Gastrocnemius medialis (tissue), 4 donors: ENCODE measurements at regions of chr18 and their contacts with region 1.

Region 1: GRCh38 chr18:63963615-63964256 is 6.1 kb upstream of the SERPINB8 start:
- DNase-seq: no peak
- ATAC-seq: peak; percentile 30 to 33
- H3K4me3 ChIP-seq: no peak overlapping the region
- H3K27ac ChIP-seq: no peak overlapping the region
- H3K4me1 ChIP-seq: no peaks in the 10 kb centered on the region
- H3K27me3 ChIP-seq: no peaks in the 10 kb centered on the region
- CTCF ChIP-seq: peak; percentile 28 to 74 (median 44)
- POLR2A ChIP-seq: no peak

Region 2: DNA sequence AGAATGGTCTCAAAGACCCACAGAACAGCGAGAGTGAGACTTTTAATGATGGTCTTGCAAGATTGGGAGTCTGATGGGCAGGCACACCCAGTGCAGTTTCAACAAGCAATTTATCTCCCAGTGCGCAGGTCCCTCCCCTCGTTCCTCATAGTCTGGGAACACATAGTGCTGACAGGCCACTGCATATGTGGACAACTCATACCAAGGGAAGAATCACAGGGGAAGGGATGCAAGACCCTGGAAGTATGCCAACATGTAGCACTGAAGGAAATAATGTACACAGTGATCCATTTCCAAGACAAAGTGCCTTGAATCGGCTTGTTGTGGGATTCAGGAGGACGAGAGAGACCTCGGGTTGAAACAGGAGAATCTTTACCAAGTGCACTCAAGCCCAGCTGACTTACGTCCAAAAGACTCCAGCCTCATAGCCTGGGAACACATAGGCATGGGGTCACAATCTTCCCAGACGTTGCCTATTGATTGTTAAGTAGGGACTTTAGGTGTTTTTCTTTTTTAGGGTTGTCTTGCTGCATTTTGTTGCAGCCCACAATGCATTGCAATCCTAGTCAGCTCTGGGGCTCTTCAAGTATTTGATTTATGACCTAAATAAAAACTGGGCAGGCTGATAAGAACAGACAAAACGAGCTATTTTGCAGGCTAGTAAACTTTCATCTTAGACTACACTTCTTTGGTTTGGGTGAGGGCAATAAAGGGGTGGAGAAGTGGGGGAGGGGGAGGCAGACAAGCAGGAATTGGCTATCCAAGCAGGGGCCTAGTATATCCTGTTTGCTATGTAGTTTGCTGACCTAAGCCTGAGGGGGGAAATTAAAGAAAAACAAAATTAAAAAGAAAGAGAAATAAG is 511.7 kb before region 1 on chr18:
- in situ Hi-C with region 1: no loop called
- intact Hi-C with region 1: no loop called
- DNase-seq: no peak
- ATAC-seq: no peak
- H3K4me3 ChIP-seq: no peak overlapping the region
- H3K27ac ChIP-seq: no peak overlapping the region
- H3K4me1 ChIP-seq: no peaks in the 10 kb centered on the region
- H3K27me3 ChIP-seq: no peaks in the 10 kb centered on the region
- CTCF ChIP-seq: no peak
- POLR2A ChIP-seq: no peak

Region 3: DNA sequence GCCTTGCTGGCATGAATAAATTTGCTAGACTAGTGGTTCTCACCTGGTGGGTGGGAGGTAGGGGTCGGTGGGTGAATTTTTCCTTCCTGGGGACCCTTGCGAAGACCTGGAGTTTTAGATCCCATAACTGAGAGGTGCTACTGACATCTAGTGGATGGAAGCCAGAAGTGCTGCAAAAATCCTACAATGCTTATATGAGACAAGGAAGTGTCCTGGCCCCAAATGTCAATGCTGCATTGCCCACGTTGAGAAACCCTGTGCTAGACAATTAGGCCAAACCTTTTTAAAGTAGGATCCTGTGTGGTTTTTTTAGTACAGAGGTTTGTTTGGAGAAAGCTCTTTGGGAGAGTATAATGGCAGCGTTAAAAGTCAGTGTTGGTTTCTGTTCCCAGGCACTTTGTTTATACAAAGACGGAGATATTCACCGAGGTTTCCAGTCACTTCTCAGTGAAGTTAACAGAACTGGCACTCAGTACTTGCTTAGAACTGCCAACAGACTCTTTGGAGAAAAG is 15.7 kb after region 1 on chr18:
- in situ Hi-C with region 1: no loop called
- intact Hi-C with region 1: loop called (anchors 1 kb)
- DNase-seq: peak; percentile 9 to 23
- ATAC-seq: peak; percentile 50 to 78
- H3K4me3 ChIP-seq: peak overlapping the region in 3 of 4 donors; percentile 8 to 39 (median 10)
- H3K27ac ChIP-seq: no peak overlapping the region
- H3K4me1 ChIP-seq: peaks cover 0 to 7% of the 10 kb centered on the region in 2 donors
- H3K27me3 ChIP-seq: no peaks in the 10 kb centered on the region
- CTCF ChIP-seq: peak; percentile 43 to 75 (median 55)
- POLR2A ChIP-seq: no peak

Region 4: DNA sequence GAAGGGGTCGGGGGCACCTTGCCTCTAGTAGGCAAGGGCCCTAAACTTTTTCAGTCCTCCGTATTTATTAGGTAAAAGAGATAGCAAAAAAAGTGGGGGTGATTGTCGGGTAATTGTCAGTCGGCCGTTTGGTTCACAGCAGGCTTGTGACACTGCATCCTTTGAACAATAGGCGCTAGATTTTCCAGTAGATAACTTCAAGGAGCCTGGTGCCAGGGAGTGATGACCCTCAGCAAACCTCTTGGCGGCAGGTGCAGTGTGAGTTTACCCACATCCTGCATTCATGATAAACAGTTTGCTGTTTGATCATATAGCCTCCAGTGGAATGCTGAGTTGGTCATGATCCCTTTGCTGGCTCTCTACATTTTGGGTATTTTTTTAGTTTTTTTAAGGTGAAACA is 29.0 kb after region 1 on chr18:
- in situ Hi-C with region 1: no loop called
- intact Hi-C with region 1: loop called (anchors 1 kb)
- DNase-seq: no peak
- ATAC-seq: no peak
- H3K4me3 ChIP-seq: no peak overlapping the region
- H3K27ac ChIP-seq: no peak overlapping the region
- H3K4me1 ChIP-seq: no peaks in the 10 kb centered on the region
- H3K27me3 ChIP-seq: no peaks in the 10 kb centered on the region
- CTCF ChIP-seq: no peak
- POLR2A ChIP-seq: no peak

Region 5: DNA sequence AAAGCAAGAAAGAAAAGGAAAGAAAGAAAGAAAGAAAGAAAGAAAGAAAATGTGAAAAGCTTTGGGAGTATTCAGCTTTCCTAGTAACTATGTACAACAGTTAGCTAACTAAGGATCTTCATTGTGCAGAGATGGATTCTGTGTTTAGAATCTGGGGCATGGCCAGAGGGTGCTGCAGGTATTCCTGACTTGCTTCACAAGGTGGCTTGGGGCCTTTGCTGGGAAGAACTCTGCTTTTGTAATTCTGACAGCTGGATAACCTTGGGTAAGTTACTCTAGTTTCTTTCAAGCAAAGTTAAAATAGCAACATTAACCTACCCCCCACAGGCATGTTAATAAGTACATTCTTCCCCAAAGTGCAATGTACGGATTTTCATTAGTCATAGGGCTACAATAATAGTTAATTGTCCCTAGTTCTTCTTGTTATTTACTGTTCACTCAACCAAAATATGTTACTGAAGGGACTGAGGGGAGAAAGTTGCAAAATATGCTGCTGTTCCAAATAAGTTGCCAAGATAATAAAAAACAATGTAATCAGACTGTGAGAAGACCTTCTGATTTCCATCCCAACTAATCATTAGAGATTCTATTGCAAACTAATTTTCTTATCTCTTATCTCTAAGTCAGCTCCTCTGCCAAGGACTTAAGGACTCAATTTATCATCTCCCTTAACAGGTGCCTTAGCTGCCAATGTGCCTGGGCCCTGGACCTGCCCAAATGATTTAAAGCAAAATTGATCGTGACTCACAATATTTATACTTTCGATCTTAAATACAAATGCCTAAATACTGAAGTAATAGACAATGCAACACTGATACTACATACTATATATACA is 56.4 kb after region 1 on chr18:
- in situ Hi-C with region 1: no loop called
- intact Hi-C with region 1: no loop called
- DNase-seq: no peak
- ATAC-seq: no peak
- H3K4me3 ChIP-seq: no peak overlapping the region
- H3K27ac ChIP-seq: no peak overlapping the region
- H3K4me1 ChIP-seq: no peaks in the 10 kb centered on the region
- H3K27me3 ChIP-seq: no peaks in the 10 kb centered on the region
- CTCF ChIP-seq: no peak
- POLR2A ChIP-seq: no peak

Region 6: DNA sequence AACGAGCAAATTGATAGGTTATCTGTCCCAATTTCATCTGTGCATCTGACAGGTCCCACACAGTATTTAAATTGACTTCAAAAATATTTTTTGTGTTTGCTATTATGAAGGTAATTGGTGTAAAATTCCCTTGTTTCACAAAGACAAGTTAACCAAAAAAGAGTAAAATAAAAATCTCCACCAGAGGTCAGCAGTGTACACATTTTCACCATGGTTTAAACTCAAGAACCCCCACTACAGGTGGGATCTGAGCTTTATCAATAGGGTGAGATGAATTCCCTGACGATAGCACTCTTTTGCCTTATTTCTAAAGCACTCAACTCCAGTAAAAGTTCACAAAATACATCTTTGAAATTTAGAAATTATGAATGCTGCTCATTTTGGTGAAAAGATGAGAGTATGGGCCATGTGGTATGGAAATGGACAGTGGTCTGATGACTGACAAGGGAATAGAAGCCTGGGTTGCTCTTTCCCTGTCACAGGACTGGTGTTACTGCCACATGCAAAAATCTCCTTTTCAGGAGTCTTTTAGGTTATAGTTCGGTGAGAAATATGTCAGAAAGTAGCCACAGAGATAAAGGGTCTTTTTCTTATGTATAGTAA is 74.2 kb after region 1 on chr18:
- in situ Hi-C with region 1: no loop called
- intact Hi-C with region 1: no loop called
- DNase-seq: no peak
- ATAC-seq: no peak
- H3K4me3 ChIP-seq: no peak overlapping the region
- H3K27ac ChIP-seq: no peak overlapping the region
- H3K4me1 ChIP-seq: no peaks in the 10 kb centered on the region
- H3K27me3 ChIP-seq: no peaks in the 10 kb centered on the region
- CTCF ChIP-seq: peak in 1 of 5 experiments; percentile 25
- POLR2A ChIP-seq: no peak

Region 7: GRCh38 chr18:64271246-64271645 is 307.5 kb after region 1 on chr18:
- in situ Hi-C with region 1: no loop called
- intact Hi-C with region 1: no loop called
- DNase-seq: no peak
- ATAC-seq: no peak
- H3K4me3 ChIP-seq: no peak overlapping the region
- H3K27ac ChIP-seq: no peak overlapping the region
- H3K4me1 ChIP-seq: no peaks in the 10 kb centered on the region
- H3K27me3 ChIP-seq: no peaks in the 10 kb centered on the region
- CTCF ChIP-seq: no peak
- POLR2A ChIP-seq: no peak